Calu3 (cell line): ENCODE measurements at regions of chr10 and their contacts with region 1.

Region 1: DNA sequence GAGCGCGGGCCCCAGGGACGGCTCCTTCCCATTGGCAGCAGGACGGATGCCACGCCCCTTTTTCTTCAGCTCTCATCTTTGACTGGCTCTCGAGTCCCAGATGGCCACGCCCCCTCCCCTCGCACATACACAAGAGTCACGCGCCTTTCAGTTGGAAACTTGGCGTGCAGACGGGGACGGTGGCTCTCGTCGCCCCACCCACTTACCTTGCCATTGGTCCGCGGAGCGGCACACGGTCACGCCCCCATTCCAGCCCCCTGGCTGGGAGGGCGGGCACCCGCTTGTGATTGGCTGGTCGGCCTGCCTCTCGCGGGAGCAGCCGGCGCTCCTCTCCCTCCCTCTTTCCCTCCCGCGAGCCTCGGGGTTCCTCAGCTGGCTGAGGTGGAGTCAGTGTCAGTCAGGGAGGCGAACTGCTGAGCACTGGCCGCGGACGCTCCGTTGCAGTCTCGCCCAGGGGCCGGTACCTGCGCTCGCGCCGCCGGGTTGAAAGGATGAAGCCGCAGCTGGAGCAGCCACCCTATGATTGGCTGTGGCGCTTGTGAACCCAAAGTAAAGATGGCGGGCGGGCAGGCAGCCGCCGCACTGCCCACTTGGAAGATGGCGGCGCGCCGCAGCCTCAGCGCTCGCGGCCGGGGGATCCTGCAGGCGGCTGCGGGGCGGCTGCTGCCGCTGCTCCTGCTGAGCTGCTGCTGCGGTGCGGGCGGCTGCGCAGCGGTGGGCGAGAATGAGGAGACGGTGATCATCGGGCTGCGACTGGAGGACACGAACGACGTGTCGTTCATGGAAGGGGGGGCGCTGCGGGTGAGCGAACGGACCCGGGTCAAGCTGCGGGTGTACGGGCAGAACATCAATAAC is at the start of gene CNNM2:
- DNase-seq: peak; percentile 97
- H3K4me3 Mint-ChIP-seq: peak within 1 kb of the TSS; percentile 98
- H3K27ac Mint-ChIP-seq: peak within 1 kb of the TSS; percentile 70
- H3K4me1 Mint-ChIP-seq: peaks cover 26% of the 10 kb centered on the region
- H3K27me3 Mint-ChIP-seq: no peaks in the 10 kb centered on the region
- CTCF ChIP-seq: no peak
- total RNA-seq, gene CNNM2: 3.2 and 4.2 TPM in 2 replicates

Region 2: DNA sequence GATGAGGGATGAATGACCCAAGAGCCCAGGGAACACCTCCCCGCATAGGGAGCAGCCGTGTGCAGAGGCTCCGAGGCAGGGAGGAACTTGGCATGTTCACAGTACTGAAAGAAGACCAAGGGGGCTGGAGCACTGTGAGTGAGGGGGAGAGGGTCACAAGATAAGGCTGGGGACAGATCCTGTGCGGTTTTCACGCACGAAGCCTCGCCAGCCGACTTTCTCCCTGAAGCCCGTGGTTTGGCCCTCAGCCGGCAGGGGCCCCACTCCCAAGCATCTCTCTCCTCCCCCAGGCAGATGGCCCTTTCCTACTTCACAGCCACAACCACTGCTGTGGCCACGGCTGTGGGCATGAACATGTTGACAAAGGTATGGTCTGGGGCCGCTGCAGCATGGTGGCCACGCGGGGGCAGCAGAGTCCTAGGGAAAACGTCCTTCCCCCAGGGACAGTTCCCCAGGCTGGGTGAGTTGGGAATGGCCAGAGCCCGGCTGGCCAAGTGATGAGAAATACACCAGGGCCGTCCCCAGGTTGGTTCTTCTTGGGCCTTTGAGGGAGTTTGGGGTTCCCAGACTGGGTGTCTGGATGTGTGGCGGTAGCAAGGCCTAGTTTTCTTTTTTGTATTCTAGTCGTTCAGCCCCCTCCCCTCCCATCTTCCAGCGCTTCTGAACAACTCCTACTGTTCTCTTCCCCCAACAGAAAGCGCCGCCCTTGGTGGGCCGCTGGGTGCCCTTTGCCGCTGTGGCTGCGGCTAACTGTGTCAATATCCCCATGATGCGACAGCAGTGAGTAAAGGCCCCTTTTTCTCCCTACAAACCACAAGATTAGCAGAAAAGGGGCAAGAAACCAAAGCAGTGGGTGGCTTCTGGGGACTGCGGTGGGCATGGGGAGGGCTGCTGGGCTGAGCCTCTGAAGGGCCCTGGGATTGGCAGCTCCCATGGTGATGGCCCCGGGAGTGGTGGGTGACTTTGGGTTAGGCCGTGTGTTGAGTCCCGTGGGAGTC is 188.9 kb before region 1 on chr10:
- CTCF ChIA-PET with region 1: no interaction called
- intact Hi-C with region 1: loop called (anchors 10 kb)
- DNase-seq: peak; percentile 78
- H3K4me3 Mint-ChIP-seq: no peak overlapping the region
- H3K27ac Mint-ChIP-seq: no peak overlapping the region
- H3K4me1 Mint-ChIP-seq: peaks cover 8% of the 10 kb centered on the region
- H3K27me3 Mint-ChIP-seq: no peaks in the 10 kb centered on the region
- CTCF ChIP-seq: peak; percentile 41

Region 3: GRCh38 chr10:103062604-103063590 is 144.7 kb after region 1 on chr10:
- CTCF ChIA-PET with region 1: interaction called, 13 read pairs
- intact Hi-C with region 1: no loop called
- DNase-seq: peak; percentile 12
- H3K4me3 Mint-ChIP-seq: no peak overlapping the region
- H3K27ac Mint-ChIP-seq: no peak overlapping the region
- H3K4me1 Mint-ChIP-seq: no peaks in the 10 kb centered on the region
- H3K27me3 Mint-ChIP-seq: peaks cover 21% of the 10 kb centered on the region
- CTCF ChIP-seq: no peak

Region 4: GRCh38 chr10:103069453-103070331 is 151.5 kb after region 1 on chr10:
- CTCF ChIA-PET with region 1: interaction called, 5 read pairs
- intact Hi-C with region 1: loop called (anchors 1 kb)
- DNase-seq: peak; percentile 69
- H3K4me3 Mint-ChIP-seq: no peak overlapping the region
- H3K27ac Mint-ChIP-seq: no peak overlapping the region
- H3K4me1 Mint-ChIP-seq: no peaks in the 10 kb centered on the region
- H3K27me3 Mint-ChIP-seq: peaks cover 21% of the 10 kb centered on the region
- CTCF ChIP-seq: peak; percentile 71